Breast epithelium (tissue), 4 donors: ENCODE measurements at regions of chr3 and their contacts with region 1.

Region 1: DNA sequence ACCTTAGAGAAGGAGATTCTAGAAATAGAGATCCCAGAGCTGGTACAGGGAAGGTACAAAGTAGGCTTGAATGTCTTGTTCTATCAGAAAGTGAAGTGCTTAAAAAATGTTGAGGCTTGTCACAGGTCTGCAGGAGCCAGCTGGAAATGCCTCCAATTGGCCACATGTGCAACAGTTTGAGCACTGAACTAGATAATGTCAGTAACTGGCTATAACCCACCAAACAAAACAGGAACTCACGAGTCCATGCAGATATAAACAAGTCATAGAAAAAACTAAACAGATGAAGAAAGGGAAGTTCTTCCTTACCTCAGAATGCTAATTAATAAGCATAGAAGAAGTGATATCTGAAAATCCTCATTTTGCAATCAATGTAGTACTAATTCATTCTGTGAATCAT is 11.9 kb upstream of the TF start:
- DNase-seq: no peak
- H3K4me3 ChIP-seq: no peak overlapping the region
- H3K27ac ChIP-seq: no peak overlapping the region
- H3K4me1 ChIP-seq: no peaks in the 10 kb centered on the region
- H3K27me3 ChIP-seq: no peaks in the 10 kb centered on the region
- CTCF ChIP-seq: no peak
- POLR2A ChIP-seq: no peak

Region 2: DNA sequence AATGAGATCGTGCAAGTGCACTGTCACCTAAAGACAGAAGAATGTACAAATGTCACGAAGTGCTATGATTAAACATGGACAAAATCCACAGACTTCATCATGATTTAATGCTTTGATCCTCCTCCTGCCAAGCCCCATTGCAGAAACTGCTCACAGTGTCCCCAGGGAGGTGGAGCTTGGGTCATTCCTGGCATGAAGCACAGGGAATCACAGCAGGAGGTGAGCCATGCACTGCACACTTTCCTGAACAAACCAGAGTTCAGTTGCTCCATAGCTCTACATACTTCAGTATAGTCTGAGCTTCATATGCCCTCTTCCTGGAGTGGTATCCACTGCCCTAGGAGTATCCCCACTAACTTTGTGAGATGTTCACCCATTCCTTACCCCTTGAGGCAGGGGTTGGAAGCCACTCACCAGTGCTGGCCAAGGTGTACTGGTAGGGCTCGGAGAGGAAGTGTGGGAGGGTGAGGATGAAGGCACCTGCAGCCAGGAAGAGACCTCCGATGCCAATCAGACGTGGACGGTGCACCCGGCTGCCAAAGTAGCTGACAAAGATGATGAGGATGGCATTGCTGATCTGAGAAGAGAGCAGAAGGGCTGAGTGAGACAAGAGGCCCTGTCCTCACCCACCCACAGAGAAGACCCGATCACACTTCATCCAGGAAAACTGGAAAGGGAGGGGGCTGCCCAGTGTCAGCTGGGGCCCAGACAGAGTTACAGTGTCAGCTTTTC is 239.1 kb after region 1 on chr3:
- intact Hi-C with region 1: loop called (anchors 5 kb)
- DNase-seq: no peak
- H3K4me3 ChIP-seq: no peak overlapping the region
- H3K27ac ChIP-seq: no peak overlapping the region
- H3K4me1 ChIP-seq: no peaks in the 10 kb centered on the region
- H3K27me3 ChIP-seq: no peaks in the 10 kb centered on the region
- CTCF ChIP-seq: no peak
- POLR2A ChIP-seq: no peak

Region 3: DNA sequence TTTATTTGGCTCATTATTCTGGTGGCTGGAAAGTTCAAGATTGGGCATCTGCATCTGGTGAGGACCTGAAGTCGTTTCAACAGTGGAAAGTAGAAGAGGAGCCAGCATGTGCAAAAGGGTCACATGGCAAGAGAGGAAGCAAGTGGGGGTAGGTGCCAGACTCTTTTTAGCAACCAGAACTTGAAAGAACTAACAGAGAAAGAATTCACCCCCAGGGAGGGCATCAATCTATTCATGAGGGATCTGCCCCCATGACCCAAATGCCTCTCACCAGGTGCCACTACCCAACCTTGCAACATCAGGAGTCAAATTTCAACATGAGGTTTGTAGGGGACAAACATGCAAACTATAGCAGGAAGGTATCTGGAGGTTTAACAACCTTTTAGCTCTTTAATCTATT is 526.7 kb after region 1 on chr3:
- intact Hi-C with region 1: no loop called
- DNase-seq: no peak
- H3K4me3 ChIP-seq: no peak overlapping the region
- H3K27ac ChIP-seq: no peak overlapping the region
- H3K4me1 ChIP-seq: no peaks in the 10 kb centered on the region
- H3K27me3 ChIP-seq: no peaks in the 10 kb centered on the region
- CTCF ChIP-seq: no peak
- POLR2A ChIP-seq: no peak